Heart left ventricle (tissue), 16 donors: ENCODE measurements at regions of chr1 and their contacts with region 1.

Region 1: DNA sequence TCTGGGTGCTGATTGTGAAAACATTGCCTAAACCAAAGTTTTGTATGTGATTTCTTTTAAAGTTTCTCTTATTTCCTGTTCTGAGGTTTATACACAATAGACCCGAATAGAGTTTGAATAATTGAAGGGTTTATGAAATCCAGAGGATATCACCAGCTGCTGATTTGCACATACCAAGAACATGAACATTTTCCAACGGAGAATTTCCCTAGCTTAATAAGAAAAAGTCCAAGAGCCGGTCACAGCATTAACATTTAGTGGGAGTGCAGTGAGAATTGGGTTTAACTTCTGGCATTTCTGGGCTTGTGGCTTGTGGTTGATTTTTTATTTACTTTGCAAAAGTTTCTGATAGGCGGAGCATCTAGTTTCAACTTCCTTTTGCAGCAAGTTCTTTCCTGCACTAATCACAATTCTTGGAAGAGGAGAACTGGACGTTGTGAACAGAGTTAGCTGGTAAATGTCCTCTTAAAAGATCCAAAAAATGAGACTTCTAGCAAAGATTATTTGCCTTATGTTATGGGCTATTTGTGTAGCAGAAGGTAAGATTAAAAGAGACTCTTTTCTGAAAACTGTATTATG is at the start of gene CFH:
- DNase-seq: peak in 1 of 5 donors; percentile 7
- ATAC-seq: peak; percentile 51 to 77 (median 66)
- H3K4me3 ChIP-seq: peak within 1 kb of the TSS in 11 of 12 donors; percentile 5 to 60 (median 44)
- H3K27ac ChIP-seq: peak within 1 kb of the TSS in 9 of 12 donors; percentile 5 to 67 (median 50)
- H3K4me1 ChIP-seq: peaks cover 0 to 17% (median 0%) of the 10 kb centered on the region in 12 donors
- H3K27me3 ChIP-seq: no peaks in the 10 kb centered on the region
- CTCF ChIP-seq: no peak
- POLR2A ChIP-seq: peak in 1 of 2 donors; percentile 17
- total RNA-seq, gene CFH: 8.7 to 141 (median 26.8) TPM

Region 2: DNA sequence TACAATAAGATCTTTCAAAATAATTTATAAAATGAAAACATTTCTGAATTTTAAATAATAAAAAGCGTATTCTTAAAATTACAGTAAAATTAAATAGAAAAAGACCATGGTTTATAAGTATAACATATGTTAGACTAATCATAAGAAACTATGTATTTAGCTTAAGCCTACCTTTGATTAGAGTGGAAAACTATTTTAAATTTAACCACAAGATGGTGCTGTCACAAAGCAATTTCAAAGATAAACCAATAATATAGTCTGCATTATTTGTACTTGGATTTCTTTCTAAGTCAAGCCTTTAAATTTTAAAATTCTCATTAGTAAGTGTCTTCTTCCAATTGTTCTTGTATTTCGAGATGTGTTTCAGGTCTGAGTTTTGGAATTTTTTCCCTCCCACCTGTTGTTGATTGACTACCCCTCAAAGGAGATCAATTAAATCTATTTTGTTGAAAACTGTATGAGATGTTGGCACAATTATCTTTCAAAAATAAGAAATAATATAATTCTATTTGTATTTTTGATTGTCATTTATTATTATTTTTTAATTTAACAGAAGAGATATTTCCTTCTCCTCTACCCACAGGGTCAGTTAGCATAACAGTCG is 503.3 kb before region 1 on chr1:
- intact Hi-C with region 1: loop called in 2 of 10 experiments (anchors 5 to 10 kb)
- DNase-seq: no peak
- ATAC-seq: no peak
- H3K4me3 ChIP-seq: no peak overlapping the region
- H3K27ac ChIP-seq: no peak overlapping the region
- H3K4me1 ChIP-seq: peaks cover 0 to 5% (median 0%) of the 10 kb centered on the region in 12 donors
- H3K27me3 ChIP-seq: no peaks in the 10 kb centered on the region
- CTCF ChIP-seq: peak; percentile 35 to 77 (median 58)
- POLR2A ChIP-seq: no peak

Region 3: GRCh38 chr1:196344453-196344852 is 307.3 kb before region 1 on chr1:
- intact Hi-C with region 1: loop called in 1 of 10 experiments (anchors 10 kb)
- DNase-seq: no peak
- ATAC-seq: no peak
- H3K4me3 ChIP-seq: no peak overlapping the region
- H3K27ac ChIP-seq: no peak overlapping the region
- H3K4me1 ChIP-seq: no peaks in the 10 kb centered on the region
- H3K27me3 ChIP-seq: no peaks in the 10 kb centered on the region
- CTCF ChIP-seq: no peak
- POLR2A ChIP-seq: no peak

Region 4: DNA sequence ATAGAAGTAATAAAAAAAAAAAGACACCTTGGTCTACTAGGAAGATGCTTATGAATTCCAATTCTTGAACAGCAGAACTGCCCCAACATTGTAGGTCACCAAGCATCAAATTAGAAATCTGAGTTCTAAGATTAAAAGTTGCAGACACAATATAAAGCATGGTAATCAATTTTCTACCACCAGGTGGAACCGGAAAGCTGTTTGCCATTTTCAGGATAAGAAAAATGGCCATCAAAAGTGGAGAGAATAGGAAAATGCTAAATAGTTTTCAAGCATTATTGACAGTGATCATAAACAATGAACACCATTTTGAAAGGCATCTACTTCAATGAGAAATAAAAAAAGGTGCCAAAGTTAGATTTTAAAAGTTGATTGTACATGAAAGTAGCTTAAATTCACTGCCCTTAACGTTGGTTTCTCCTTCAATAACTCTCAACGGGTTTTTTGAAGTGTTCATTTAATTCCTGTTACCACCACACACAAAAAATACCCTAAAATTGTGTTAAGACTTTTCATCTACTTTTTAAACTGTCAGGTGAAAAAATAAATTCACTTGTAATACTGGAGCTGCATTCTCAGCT is 296.4 kb before region 1 on chr1:
- intact Hi-C with region 1: loop called in 4 of 10 experiments (anchors 5 to 10 kb)
- DNase-seq: no peak
- ATAC-seq: no peak
- H3K4me3 ChIP-seq: no peak overlapping the region
- H3K27ac ChIP-seq: no peak overlapping the region
- H3K4me1 ChIP-seq: no peaks in the 10 kb centered on the region
- H3K27me3 ChIP-seq: no peaks in the 10 kb centered on the region
- CTCF ChIP-seq: peak in 10 of 12 donors; percentile 25 to 59 (median 44)
- POLR2A ChIP-seq: no peak

Region 5: GRCh38 chr1:196361104-196361714 is 290.5 kb before region 1 on chr1:
- intact Hi-C with region 1: loop called in 4 of 10 experiments (anchors 5 to 10 kb)
- DNase-seq: no peak
- ATAC-seq: no peak
- H3K4me3 ChIP-seq: no peak overlapping the region
- H3K27ac ChIP-seq: no peak overlapping the region
- H3K4me1 ChIP-seq: no peaks in the 10 kb centered on the region
- H3K27me3 ChIP-seq: no peaks in the 10 kb centered on the region
- CTCF ChIP-seq: no peak
- POLR2A ChIP-seq: no peak

Region 6: GRCh38 chr1:196450143-196451095 is 201.3 kb before region 1 on chr1:
- intact Hi-C with region 1: no loop called
- DNase-seq: no peak
- ATAC-seq: no peak
- H3K4me3 ChIP-seq: no peak overlapping the region
- H3K27ac ChIP-seq: no peak overlapping the region
- H3K4me1 ChIP-seq: no peaks in the 10 kb centered on the region
- H3K27me3 ChIP-seq: no peaks in the 10 kb centered on the region
- CTCF ChIP-seq: no peak
- POLR2A ChIP-seq: no peak

Region 7: DNA sequence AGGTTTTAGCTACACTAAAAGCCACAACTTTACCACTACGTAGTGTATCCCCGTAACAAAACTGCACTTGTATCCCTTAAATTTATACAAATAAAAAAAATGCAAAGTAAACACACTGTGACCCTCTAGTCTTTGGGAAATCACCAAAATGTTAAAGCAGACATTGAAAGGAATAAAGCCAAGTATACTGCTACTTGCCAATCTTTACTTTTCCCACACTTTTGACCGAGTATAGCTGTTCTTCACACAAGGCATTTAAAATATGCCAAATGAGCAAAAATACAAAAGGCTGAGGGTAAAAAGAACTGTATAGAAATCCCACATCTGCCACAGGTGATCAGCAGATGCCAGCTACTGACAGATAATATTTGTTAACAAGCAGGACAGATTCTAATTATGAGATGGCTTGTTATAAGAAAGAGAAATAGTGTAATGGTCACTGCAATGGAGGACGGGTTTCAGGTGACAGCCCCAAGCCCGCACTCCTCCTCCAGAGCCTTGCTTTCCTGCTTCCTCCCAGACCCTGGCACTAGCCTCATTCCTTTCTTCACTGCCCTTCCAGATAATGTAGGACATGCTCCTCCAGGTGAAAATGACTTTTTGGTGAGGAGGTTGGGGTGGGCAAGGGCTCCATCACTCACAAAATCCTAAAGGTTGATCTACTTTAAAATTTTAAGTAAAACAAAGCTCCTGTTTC is 61.6 kb before region 1 on chr1:
- intact Hi-C with region 1: no loop called
- DNase-seq: no peak
- ATAC-seq: no peak
- H3K4me3 ChIP-seq: no peak overlapping the region
- H3K27ac ChIP-seq: no peak overlapping the region
- H3K4me1 ChIP-seq: no peaks in the 10 kb centered on the region
- H3K27me3 ChIP-seq: no peaks in the 10 kb centered on the region
- CTCF ChIP-seq: no peak
- POLR2A ChIP-seq: no peak

Region 8: GRCh38 chr1:196774603-196775002 is 122.9 kb after region 1 on chr1 and contains the start of gene CFHR3:
- intact Hi-C with region 1: no loop called
- DNase-seq: no peak
- ATAC-seq: no peak
- H3K4me3 ChIP-seq: no peak within 1 kb of the TSS
- H3K27ac ChIP-seq: no peak within 1 kb of the TSS
- H3K4me1 ChIP-seq: no peaks in the 10 kb centered on the region
- H3K27me3 ChIP-seq: no peaks in the 10 kb centered on the region
- CTCF ChIP-seq: no peak
- POLR2A ChIP-seq: no peak
- total RNA-seq, gene CFHR3: 0.21 TPM in 1 of 9 donors, not detected in the others